A673 (cell line): ENCODE measurements at regions of chr7 and their contacts with region 1.

Region 1: GRCh38 chr7:133434055-133434865 is 181.4 kb downstream of the EXOC4 start:
- DNase-seq: peak; percentile 30
- H3K4me3 ChIP-seq: no peak overlapping the region
- H3K27ac ChIP-seq: no peak overlapping the region
- H3K4me1 ChIP-seq: peaks cover 4% of the 10 kb centered on the region
- H3K27me3 ChIP-seq: no peaks in the 10 kb centered on the region
- CTCF ChIP-seq: peak; percentile 61

Region 2: DNA sequence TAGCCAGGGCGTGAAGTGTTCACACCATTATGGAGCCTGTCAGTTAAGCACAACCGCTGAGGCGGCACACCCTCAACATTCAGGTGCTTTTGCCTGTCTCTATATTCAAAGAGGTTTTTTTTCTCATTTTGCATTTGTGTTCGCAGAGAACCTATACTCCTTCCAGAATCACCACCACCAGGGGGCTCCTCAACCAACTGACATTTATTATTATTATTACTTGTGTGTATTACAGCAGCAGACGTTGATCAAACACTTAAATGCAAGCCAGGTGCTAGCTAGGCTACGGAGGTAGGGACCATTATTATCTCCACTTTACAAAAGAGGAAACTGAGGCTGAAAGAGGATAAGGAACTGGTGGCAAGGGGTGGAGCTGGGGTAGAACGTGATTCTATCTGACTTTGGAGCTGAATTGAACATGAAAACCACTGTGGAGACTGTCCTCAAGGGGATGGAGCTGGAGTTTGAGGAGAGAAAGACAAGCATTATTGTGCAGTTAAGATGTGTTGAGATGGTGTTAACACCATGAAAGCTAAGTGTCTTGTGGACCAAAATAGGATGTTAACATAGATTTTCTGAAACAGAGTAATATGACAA is 724.2 kb before region 1 on chr7:
- CTCF ChIA-PET with region 1: interaction called, 4 read pairs
- POLR2A ChIA-PET with region 1: no interaction called
- intact Hi-C with region 1: loop called (anchors 10 kb)
- DNase-seq: peak; percentile 53
- H3K4me3 ChIP-seq: no peak overlapping the region
- H3K27ac ChIP-seq: no peak overlapping the region
- H3K4me1 ChIP-seq: no peaks in the 10 kb centered on the region
- H3K27me3 ChIP-seq: peaks cover 6% of the 10 kb centered on the region
- CTCF ChIP-seq: peak; percentile 74

Region 3: GRCh38 chr7:133155146-133155545 is 279.1 kb before region 1 on chr7:
- CTCF ChIA-PET with region 1: interaction called, 13 read pairs
- POLR2A ChIA-PET with region 1: no interaction called
- intact Hi-C with region 1: no loop called
- DNase-seq: no peak
- H3K4me3 ChIP-seq: no peak overlapping the region
- H3K27ac ChIP-seq: no peak overlapping the region
- H3K4me1 ChIP-seq: no peaks in the 10 kb centered on the region
- H3K27me3 ChIP-seq: peaks cover 9% of the 10 kb centered on the region
- CTCF ChIP-seq: no peak

Region 4: GRCh38 chr7:133230591-133231194 is 203.6 kb before region 1 on chr7:
- CTCF ChIA-PET with region 1: no interaction called
- POLR2A ChIA-PET with region 1: no interaction called
- intact Hi-C with region 1: loop called (anchors 10 kb)
- DNase-seq: peak; percentile 70
- H3K4me3 ChIP-seq: no peak overlapping the region
- H3K27ac ChIP-seq: no peak overlapping the region
- H3K4me1 ChIP-seq: no peaks in the 10 kb centered on the region
- H3K27me3 ChIP-seq: peaks cover 12% of the 10 kb centered on the region
- CTCF ChIP-seq: peak; percentile 89

Region 5: GRCh38 chr7:133240302-133240701 is 194.0 kb before region 1 on chr7:
- CTCF ChIA-PET with region 1: no interaction called
- POLR2A ChIA-PET with region 1: interaction called, 11 read pairs
- intact Hi-C with region 1: loop called (anchors 10 kb)
- DNase-seq: no peak
- H3K4me3 ChIP-seq: no peak overlapping the region
- H3K27ac ChIP-seq: no peak overlapping the region
- H3K4me1 ChIP-seq: no peaks in the 10 kb centered on the region
- H3K27me3 ChIP-seq: peaks cover 13% of the 10 kb centered on the region
- CTCF ChIP-seq: no peak

Region 6: DNA sequence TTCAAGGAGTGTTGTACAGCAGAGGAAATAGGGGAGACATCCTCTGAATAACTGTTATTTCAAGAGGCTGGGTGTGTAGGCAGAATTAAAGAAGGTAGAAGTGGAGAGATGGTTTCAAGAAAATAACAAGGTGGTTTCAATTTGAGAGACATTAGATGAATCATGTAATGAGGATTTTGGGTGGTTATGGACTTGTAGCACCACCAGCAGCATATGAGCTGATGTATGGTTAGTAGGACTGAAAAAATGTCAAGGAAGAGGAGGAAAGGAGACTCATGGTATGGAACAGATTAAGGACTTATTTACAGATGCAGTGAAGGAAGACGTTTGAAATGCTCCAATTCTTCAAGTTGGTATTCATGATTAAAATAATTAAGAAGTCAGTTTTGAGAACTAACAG is 15.2 kb before region 1 on chr7:
- CTCF ChIA-PET with region 1: no interaction called
- POLR2A ChIA-PET with region 1: no interaction called
- intact Hi-C with region 1: no loop called
- DNase-seq: no peak
- H3K4me3 ChIP-seq: no peak overlapping the region
- H3K27ac ChIP-seq: no peak overlapping the region
- H3K4me1 ChIP-seq: no peaks in the 10 kb centered on the region
- H3K27me3 ChIP-seq: no peaks in the 10 kb centered on the region
- CTCF ChIP-seq: no peak

Region 7: DNA sequence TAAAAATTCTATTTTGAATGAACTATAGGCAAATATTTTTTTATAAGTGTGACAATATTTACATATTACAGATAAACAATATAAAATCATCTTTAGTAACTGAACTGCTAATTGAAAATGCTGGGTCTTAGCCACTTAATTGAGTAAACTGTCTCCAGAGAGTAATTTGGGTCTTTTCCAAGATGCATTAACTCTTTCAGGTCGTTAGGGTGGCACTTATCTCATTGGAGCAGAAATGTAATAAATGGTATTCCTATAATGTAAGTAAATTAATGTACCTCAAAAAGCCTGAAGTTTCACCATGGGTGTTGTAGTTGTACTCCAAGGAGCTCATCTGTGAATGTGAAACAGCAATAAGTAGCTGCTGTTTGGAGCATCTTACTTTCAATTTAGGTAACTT is 27.2 kb after region 1 on chr7:
- CTCF ChIA-PET with region 1: no interaction called
- POLR2A ChIA-PET with region 1: no interaction called
- intact Hi-C with region 1: no loop called
- DNase-seq: no peak
- H3K4me3 ChIP-seq: no peak overlapping the region
- H3K27ac ChIP-seq: no peak overlapping the region
- H3K4me1 ChIP-seq: no peaks in the 10 kb centered on the region
- H3K27me3 ChIP-seq: no peaks in the 10 kb centered on the region
- CTCF ChIP-seq: no peak

Region 8: GRCh38 chr7:133931053-133931452 is 496.8 kb after region 1 on chr7:
- CTCF ChIA-PET with region 1: no interaction called
- POLR2A ChIA-PET with region 1: no interaction called
- intact Hi-C with region 1: no loop called
- DNase-seq: no peak
- H3K4me3 ChIP-seq: no peak overlapping the region
- H3K27ac ChIP-seq: no peak overlapping the region
- H3K4me1 ChIP-seq: peaks cover 11% of the 10 kb centered on the region
- H3K27me3 ChIP-seq: no peaks in the 10 kb centered on the region
- CTCF ChIP-seq: no peak